ENCODE measurements at regions of chr16 and their contacts with region 1.

Region 1: DNA sequence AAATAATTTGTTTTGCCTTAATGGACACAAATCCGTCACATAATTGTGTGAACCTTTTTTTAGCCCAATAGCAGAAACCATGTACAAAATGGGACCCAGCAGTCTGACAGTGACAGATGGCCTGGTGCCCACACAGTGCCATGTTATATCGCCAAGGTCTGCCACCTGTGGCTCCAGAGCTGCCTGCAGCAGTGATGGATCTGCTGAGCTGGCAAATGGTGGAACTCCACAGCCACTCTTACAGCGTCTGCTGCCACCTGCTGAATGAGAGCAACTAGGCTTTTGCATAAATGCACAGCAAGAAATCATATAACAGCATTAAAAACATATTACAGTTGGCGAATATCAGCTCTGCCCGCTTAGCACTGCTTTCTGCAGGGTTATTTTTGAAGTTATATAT is 59.4 kb downstream of the NUP93 start:
- DNase-seq: peak; percentile 41 to 80
- ATAC-seq: peak; percentile 88 to 91
- H3K4me3 ChIP-seq: no peak overlapping the region
- H3K27ac ChIP-seq: no peak overlapping the region
- H3K4me1 ChIP-seq: peaks cover 4% of the 10 kb centered on the region; the same call in 1 of the 3 replicates
- CTCF ChIP-seq: peak; percentile 63
- EP300 ChIP-seq: no peak
- POLR2A ChIP-seq: no peak
- RAD21 ChIP-seq: peak; percentile 72 to 78

Region 2: DNA sequence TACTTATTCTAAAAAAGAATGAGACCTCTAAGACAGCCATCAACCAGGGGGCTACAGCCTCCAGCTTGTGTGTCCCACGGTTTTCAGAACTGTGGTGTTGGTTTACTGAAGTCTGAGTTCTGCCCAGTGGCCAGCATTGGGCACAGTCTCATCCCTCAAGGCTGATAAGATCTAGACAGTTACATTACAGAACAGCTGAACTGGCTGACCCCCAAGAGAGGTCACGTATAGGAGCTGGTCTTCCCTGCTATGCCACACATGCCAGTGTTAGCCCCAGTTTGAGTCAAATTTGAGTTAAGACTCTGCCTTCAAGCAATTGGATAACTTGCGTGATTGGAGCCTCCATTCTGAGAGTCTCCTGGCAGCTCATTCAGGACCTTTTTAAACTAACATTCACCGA is 74.2 kb before region 1 on chr16:
- CTCF ChIA-PET with region 1: interaction called, 12 read pairs
- POLR2A ChIA-PET with region 1: no interaction called
- DNase-seq: no peak
- ATAC-seq: no peak
- H3K4me3 ChIP-seq: no peak overlapping the region
- H3K27ac ChIP-seq: no peak overlapping the region
- H3K4me1 ChIP-seq: no peaks in the 10 kb centered on the region
- CTCF ChIP-seq: no peak
- EP300 ChIP-seq: no peak
- POLR2A ChIP-seq: no peak
- RAD21 ChIP-seq: no peak

Region 3: GRCh38 chr16:56800355-56800754 is 11.0 kb after region 1 on chr16:
- CTCF ChIA-PET with region 1: interaction called, 23 read pairs
- POLR2A ChIA-PET with region 1: interaction called, 3 read pairs
- DNase-seq: no peak
- ATAC-seq: peak in 1 of 2 experiments; percentile 68; a peak in 3 of 6 replicates
- H3K4me3 ChIP-seq: no peak overlapping the region
- H3K27ac ChIP-seq: peak overlapping the region; percentile 15 to 58; a peak in 5 of 6 replicates
- H3K4me1 ChIP-seq: peaks cover 17% of the 10 kb centered on the region
- CTCF ChIP-seq: no peak
- EP300 ChIP-seq: no peak
- POLR2A ChIP-seq: no peak
- RAD21 ChIP-seq: no peak

Region 4: DNA sequence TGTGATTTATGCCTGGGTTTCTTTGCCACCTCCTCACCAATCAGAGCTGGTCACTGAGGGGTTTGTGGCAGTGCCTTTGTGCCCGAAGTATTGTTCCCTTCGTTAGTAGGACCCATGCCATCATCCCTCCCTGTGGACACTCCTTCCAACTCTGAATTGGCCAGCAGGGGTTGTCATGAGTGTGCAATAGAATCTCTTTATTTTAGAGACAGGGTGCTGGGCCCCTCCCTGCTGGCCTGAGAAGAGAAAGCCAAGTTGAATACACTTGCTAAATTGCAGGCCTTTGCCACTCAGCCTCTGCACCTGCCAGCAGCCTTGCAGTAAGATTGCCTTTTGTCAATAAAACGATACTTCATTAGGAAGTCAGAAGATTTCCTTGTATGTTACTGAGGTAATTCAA is 35.0 kb after region 1 on chr16:
- CTCF ChIA-PET with region 1: interaction called, 55 read pairs
- POLR2A ChIA-PET with region 1: no interaction called
- DNase-seq: peak; percentile 30 to 39
- ATAC-seq: peak; percentile 93
- H3K4me3 ChIP-seq: no peak overlapping the region
- H3K27ac ChIP-seq: no peak overlapping the region
- H3K4me1 ChIP-seq: no peaks in the 10 kb centered on the region
- CTCF ChIP-seq: no peak
- EP300 ChIP-seq: no peak
- POLR2A ChIP-seq: no peak
- RAD21 ChIP-seq: 0 out of 5 replicates have a peak, but pooled peaks of 1 of the 2 experiments have one; percentile 13

Region 5: DNA sequence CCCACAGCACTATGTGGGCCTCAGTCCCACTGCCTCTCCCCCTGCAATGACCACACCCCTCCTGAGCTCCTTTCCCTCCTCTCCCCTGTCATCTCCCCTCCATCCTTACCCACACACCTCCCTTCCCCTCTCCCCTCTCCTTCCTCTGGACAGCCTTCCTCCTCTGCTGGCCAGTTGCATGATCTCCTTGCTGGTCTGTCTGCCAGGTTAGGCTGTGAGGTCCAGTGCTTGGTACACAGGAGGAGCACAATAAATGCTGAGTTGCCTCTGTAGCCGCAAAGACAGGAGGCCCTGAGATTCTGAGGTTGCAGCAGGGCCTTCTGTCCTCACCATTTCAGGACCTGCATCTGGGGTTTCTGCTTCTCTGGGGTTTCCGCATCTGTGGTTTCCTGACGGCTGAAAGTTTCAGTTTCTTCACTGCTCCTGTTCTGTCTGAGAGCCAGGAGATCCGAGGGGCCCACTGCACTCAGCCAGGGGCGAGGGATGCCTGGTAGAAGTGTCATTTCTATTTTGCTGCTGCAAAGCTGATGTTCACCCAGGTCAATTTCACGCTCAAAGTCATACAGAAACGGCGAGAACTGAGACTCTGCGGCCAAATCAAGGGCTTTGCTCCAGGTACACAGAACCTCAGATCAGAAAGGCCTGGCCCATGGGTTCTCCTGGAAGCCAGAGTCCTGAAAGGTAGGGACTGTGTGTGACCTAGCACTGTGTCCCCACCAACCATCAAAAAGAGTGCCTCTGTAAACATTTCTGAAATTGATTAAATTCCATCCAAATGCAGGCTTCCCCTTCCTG is 71.1 kb after region 1 on chr16:
- CTCF ChIA-PET with region 1: interaction called, 151 read pairs
- POLR2A ChIA-PET with region 1: no interaction called
- DNase-seq: no peak
- ATAC-seq: no peak
- H3K4me3 ChIP-seq: no peak overlapping the region
- H3K27ac ChIP-seq: peak overlapping the region; percentile 34 to 35; a peak in 4 of 6 replicates
- H3K4me1 ChIP-seq: peaks cover 27% of the 10 kb centered on the region
- CTCF ChIP-seq: no peak
- EP300 ChIP-seq: no peak
- POLR2A ChIP-seq: no peak
- RAD21 ChIP-seq: no peak

Region 6: GRCh38 chr16:56950881-56951771 is 161.8 kb after region 1 on chr16:
- CTCF ChIA-PET with region 1: interaction called, 12 read pairs
- POLR2A ChIA-PET with region 1: no interaction called
- DNase-seq: peak; percentile 60 to 65
- ATAC-seq: peak; percentile 76 to 93
- H3K4me3 ChIP-seq: no peak overlapping the region
- H3K27ac ChIP-seq: no peak overlapping the region
- H3K4me1 ChIP-seq: no peaks in the 10 kb centered on the region
- CTCF ChIP-seq: peak; percentile 58
- EP300 ChIP-seq: no peak
- POLR2A ChIP-seq: no peak
- RAD21 ChIP-seq: peak; percentile 64 to 73

Region 7: DNA sequence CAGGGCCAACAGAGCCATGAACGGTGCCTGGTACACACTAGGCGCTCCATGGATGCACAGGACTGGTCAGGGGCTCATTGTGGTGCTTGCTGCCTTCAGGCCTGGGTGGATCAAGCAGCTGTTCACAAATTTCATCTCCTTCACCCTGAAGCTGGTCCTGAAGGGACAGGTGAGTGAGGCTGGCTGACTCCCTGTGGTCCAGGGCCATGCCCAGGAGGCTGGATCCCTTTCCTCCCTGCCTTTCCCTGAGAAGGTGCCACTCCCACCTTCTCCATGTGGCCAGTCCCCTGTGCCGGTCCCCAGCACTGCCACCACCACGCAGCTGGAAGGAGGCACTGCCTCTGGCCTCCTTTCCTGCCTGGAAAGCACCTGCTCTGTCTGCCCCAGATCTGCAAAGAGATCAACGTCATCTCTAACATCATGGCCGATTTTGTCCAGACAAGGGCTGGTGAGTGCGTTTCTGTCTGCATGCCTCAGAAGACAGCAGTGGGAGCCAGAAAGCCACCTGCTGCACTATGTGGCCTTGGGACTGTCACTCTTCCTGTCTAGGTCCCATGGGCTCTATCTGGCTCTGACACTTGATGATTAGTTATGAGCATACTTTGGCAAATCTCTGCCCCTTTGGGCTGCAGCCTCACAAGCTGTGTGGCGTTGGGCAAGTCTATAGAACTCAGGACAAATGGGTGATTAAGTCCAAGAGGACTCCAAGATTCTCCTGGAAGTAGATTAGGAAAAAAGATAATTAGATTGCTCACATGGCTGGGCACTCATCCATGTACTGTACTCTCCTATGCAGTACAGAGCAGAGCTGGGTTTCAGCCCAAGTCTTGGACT is 181.8 kb after region 1 on chr16:
- CTCF ChIA-PET with region 1: no interaction called
- POLR2A ChIA-PET with region 1: no interaction called
- DNase-seq: no peak
- ATAC-seq: peak in 1 of 2 experiments; percentile 25; a peak in 2 of 6 replicates
- H3K4me3 ChIP-seq: no peak overlapping the region
- H3K27ac ChIP-seq: no peak overlapping the region
- H3K4me1 ChIP-seq: no peaks in the 10 kb centered on the region; the same call in 2 of the 3 replicates
- CTCF ChIP-seq: no peak
- EP300 ChIP-seq: no peak
- POLR2A ChIP-seq: no peak
- RAD21 ChIP-seq: no peak

Measured in A549 (cell line).